Mammary epithelial cell (primary cell): ENCODE measurements at regions of chr13 and their contacts with region 1.

Region 1: DNA sequence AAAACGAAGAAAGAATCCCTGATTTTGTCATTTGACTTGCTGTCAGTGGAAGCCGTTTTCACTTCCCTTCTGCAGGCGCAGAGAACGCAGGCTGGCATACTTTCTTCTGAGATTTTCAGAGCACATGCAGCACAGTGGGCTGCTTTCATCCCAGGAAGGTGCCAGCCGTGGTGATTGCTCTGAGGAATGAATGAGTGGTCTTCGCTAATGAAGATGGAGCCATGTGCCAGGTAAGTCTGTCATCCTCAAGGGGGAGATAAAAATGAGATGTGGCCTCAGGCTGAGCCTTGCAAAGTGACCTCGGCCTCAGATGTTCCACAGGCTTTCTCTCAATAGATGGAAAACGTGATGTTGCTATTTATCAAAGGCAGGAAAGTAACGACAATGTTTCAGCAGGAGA is 94.6 kb upstream of the FARP1 start:
- DNase-seq: no peak
- H3K4me3 ChIP-seq: no peak overlapping the region
- H3K27ac ChIP-seq: no peak overlapping the region
- H3K4me1 ChIP-seq: no peaks in the 10 kb centered on the region
- H3K27me3 ChIP-seq: no peaks in the 10 kb centered on the region
- CTCF ChIP-seq: no peak

Region 2: DNA sequence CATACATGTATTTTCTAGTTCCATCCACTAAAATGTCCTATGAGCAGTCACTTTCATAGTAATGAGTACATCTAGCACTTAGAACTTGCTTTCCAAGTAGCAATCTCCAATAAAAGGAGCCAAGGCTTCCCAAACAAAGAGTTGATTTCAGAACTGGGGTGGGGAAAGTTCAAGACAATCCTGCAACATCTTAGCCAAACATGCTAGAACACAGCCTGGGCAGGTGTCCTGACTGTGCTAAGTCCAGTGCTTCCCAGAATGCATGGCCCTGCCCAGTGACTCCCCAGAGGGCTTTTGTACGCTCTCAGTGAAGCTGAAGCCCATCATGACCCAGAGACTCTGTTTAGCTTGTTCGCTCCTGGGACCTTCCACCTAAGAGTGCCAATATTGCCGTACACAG is 1045.7 kb after region 1 on chr13:
- CTCF ChIA-PET with region 1: no interaction called
- dilution Hi-C with region 1: no loop called
- in situ Hi-C with region 1: no loop called
- intact Hi-C with region 1: loop called (anchors 5 kb)
- DNase-seq: peak; percentile 4
- H3K4me3 ChIP-seq: no peak overlapping the region
- H3K27ac ChIP-seq: no peak overlapping the region
- H3K4me1 ChIP-seq: no peaks in the 10 kb centered on the region
- H3K27me3 ChIP-seq: no peaks in the 10 kb centered on the region
- CTCF ChIP-seq: no peak